ENCODE measurements at regions of chr10 and their contacts with region 1.

Region 1: DNA sequence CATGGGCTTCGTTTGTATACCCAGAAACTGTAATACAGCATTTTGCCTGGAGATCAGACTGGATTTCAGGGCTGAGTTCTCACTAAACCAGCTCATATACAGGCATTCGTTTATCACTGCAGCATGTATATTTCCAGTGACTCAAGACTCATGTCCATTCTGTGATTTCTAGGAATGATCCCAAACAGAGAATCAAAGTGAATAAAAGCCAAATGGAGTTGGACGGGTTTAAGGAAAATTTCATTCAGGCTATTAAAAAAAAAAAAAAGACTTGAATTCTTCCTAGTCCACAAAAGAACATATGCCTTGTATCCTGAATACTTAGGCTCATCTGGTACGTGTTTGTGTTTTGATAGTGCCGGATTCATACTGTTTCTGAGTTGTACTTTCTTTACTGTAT is 46.8 kb downstream of the TET1 start:
- DNase-seq: no peak
- ATAC-seq: no peak
- H3K4me3 ChIP-seq: no peak overlapping the region
- H3K27ac ChIP-seq: no peak overlapping the region
- H3K4me1 ChIP-seq: no peaks in the 10 kb centered on the region
- H3K27me3 ChIP-seq: no peaks in the 10 kb centered on the region
- CTCF ChIP-seq: no peak

Region 2: GRCh38 chr10:68406815-68407548 is 199.9 kb before region 1 on chr10 and contains the start of gene RUFY2:
- CTCF ChIA-PET with region 1: no interaction called
- POLR2A ChIA-PET with region 1: interaction called, 12 read pairs
- in situ Hi-C with region 1: no loop called
- intact Hi-C with region 1: no loop called
- DNase-seq: no peak
- ATAC-seq: peak; percentile 96
- H3K4me3 ChIP-seq: peak within 1 kb of the TSS; percentile 71 to 72
- H3K27ac ChIP-seq: peak within 1 kb of the TSS; percentile 83
- H3K4me1 ChIP-seq: peaks cover 13% of the 10 kb centered on the region
- H3K27me3 ChIP-seq: no peaks in the 10 kb centered on the region
- CTCF ChIP-seq: peak; percentile 100
- total RNA-seq, gene RUFY2: 25.1 TPM

Region 3: GRCh38 chr10:68697106-68697505 is 90.2 kb after region 1 on chr10:
- CTCF ChIA-PET with region 1: interaction called, 3 read pairs
- POLR2A ChIA-PET with region 1: interaction called, 18 read pairs
- in situ Hi-C with region 1: no loop called
- intact Hi-C with region 1: no loop called
- DNase-seq: no peak
- ATAC-seq: no peak
- H3K4me3 ChIP-seq: no peak overlapping the region
- H3K27ac ChIP-seq: no peak overlapping the region
- H3K4me1 ChIP-seq: no peaks in the 10 kb centered on the region
- H3K27me3 ChIP-seq: no peaks in the 10 kb centered on the region
- CTCF ChIP-seq: no peak